ENCODE measurements at regions of chr4 and their contacts with region 1.

Region 1: DNA sequence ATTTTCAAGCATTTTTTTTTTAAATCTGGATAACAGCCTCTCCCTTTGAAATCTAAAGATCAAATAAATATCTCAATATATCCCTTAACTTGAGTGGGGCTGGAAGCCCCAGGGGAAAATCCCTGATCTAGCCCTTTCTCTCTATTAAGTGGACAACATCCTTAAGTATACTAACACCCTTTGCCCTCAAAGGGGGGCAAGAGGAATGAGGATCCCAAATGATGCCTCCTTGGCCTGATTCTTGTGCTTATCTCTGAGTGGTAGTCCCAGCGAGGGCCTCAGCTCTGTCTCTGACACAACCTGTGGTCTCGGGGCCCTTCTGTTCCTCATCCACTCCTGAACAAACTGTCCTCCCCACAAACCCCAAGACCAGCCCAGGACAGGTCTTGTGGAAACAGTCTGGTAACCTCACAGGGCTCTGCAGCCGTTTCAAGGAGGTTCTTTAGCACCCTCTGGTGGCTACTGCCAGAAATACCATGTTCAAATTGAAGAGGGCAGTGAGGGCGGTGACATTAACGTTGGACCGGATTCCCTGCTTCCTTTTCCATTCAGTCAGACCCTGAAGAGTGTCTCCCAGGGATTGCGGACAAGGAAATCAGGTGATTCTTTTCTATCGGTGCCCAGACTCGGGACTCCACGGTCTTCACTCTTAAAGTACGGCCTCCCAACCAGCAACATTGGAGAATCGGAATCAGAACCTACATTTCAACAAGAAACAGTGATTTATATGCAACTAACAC is 12.9 kb downstream of the CXCL13 start:
- DNase-seq: peak; percentile 5
- H3K4me3 ChIP-seq: no peak overlapping the region
- CTCF ChIP-seq: peak; percentile 76

Region 2: DNA sequence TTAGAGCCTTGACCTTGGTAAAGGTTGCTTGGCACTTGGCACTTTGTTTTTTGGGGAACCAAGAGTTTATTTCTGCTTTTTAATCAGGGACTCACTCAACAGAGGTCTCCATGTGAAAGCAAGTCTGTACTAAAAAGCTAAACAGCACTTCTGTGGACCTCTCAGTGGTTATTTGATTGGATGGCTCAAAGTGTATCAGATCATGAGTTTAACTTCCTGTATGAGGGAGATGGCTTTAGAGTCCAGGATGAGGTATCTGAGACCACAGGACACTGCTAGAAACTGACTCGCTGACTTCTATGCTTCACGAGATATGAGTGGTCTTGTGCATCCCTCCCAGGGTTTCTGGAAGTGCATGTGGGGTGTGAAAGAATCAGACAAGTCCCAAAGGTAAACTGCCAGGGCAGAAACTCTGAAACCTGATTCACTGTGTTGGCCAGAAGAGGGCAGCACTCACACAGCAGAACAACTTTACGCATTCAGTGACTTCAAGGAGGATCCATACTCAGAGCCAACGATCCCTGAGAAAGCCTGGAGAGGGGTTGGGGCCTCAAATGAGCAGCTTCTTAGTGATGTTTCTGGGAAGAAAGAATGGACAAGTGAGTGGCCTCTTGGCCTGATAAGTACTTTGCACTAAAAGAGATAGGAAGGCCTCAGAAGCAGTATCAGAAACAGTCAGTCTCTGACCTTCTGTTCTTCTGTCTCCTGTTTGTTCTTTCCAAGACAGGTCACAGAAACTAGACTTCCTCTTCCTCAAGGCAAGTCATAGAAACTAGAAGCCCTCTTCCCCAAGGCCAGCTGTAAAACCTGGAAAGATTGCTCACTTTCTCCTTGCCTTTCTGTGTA is 233.2 kb before region 1 on chr4:
- CTCF ChIA-PET with region 1: interaction called, 80 read pairs
- POLR2A ChIA-PET with region 1: no interaction called
- DNase-seq: peak; percentile 3
- H3K4me3 ChIP-seq: no peak overlapping the region
- CTCF ChIP-seq: peak; percentile 81

Region 3: GRCh38 chr4:77600521-77601451 is 17.8 kb before region 1 on chr4:
- CTCF ChIA-PET with region 1: interaction called, 149 read pairs
- POLR2A ChIA-PET with region 1: no interaction called
- DNase-seq: no peak
- H3K4me3 ChIP-seq: no peak overlapping the region
- CTCF ChIP-seq: peak; percentile 76

Region 4: GRCh38 chr4:77636902-77637301 is 18.3 kb after region 1 on chr4:
- CTCF ChIA-PET with region 1: interaction called, 13 read pairs
- POLR2A ChIA-PET with region 1: no interaction called
- DNase-seq: peak; percentile 49
- H3K4me3 ChIP-seq: no peak overlapping the region
- CTCF ChIP-seq: no peak

Measured in AG04449 (cell line).